ENCODE measurements at regions of chr13 and their contacts with region 1.

Region 1: GRCh38 chr13:20773194-20774080 is at the start of gene EEF1AKMT1:
- DNase-seq: peak; percentile 97 to 98
- ATAC-seq: peak; percentile 100
- H3K4me3 ChIP-seq: peak within 1 kb of the TSS; percentile 12 to 55
- H3K27ac ChIP-seq: peak within 1 kb of the TSS; percentile 20 to 36
- H3K4me1 ChIP-seq: no peaks in the 10 kb centered on the region
- H3K27me3 ChIP-seq: no peaks in the 10 kb centered on the region
- total RNA-seq, gene EEF1AKMT1: 9.1 to 10.1 TPM

Region 2: DNA sequence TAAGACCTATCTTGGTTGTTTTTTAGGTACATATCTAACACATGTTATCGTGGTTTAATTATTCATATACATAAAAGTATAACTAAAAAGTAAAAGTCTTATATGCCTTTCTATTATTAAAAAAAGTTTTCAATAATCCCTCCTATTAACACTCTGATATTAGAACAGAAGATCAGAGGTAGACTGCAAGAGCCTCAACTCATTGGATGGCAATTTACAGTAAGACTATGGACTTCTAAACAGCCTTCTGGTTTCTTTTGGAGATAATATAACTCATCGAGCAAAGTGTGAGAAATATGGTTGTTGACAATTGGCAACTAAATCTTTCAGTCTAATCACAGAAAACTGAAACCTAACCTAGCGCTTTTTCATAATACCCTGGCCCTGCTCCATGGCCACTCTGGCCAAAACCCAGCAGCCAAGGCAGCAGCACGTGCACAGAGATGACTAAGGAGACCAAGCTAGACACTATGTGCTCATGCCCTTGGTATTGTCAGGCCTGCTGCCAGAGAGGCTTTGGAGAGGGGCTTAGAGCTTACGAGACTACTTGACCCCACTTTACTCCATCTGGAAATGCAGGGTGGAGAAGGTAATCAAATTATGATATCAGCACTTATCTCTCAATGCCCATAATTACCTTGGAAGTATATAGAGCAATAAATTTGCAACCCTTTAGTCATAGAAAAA is 40.9 kb after region 1 on chr13:
- intact Hi-C with region 1: loop called in 1 of 2 experiments (anchors 5 kb)
- DNase-seq: peak; percentile 89 to 94
- ATAC-seq: peak; percentile 93
- H3K4me3 ChIP-seq: no peak overlapping the region
- H3K27ac ChIP-seq: peak overlapping the region in 1 of 2 donors; percentile 17
- H3K4me1 ChIP-seq: peaks cover 0 to 2% of the 10 kb centered on the region in 2 donors
- H3K27me3 ChIP-seq: no peaks in the 10 kb centered on the region

Region 3: GRCh38 chr13:20828539-20829364 is 55.3 kb after region 1 on chr13:
- intact Hi-C with region 1: loop called in 1 of 2 experiments (anchors 10 kb)
- DNase-seq: no peak
- ATAC-seq: peak; percentile 63
- H3K4me3 ChIP-seq: no peak overlapping the region
- H3K27ac ChIP-seq: no peak overlapping the region
- H3K4me1 ChIP-seq: peaks cover 2 to 3% of the 10 kb centered on the region in 2 donors
- H3K27me3 ChIP-seq: no peaks in the 10 kb centered on the region